Activated CD8-positive, alpha-beta T cell treated with anti-CD3 and anti-CD28 coated beads for 36 hours (primary cell): ENCODE measurements at regions of chr1 and their contacts with region 1.

Region 1: GRCh38 chr1:25204797-25205480 is 27.4 kb downstream of the SYF2 start:
- DNase-seq: peak; percentile 26
- ATAC-seq: peak; percentile 73
- H3K4me3 Mint-ChIP-seq: no peak overlapping the region
- H3K27ac Mint-ChIP-seq: no peak overlapping the region
- H3K4me1 Mint-ChIP-seq: no peaks in the 10 kb centered on the region
- H3K27me3 Mint-ChIP-seq: peaks cover 4% of the 10 kb centered on the region
- CTCF ChIP-seq: peak; percentile 87

Region 2: DNA sequence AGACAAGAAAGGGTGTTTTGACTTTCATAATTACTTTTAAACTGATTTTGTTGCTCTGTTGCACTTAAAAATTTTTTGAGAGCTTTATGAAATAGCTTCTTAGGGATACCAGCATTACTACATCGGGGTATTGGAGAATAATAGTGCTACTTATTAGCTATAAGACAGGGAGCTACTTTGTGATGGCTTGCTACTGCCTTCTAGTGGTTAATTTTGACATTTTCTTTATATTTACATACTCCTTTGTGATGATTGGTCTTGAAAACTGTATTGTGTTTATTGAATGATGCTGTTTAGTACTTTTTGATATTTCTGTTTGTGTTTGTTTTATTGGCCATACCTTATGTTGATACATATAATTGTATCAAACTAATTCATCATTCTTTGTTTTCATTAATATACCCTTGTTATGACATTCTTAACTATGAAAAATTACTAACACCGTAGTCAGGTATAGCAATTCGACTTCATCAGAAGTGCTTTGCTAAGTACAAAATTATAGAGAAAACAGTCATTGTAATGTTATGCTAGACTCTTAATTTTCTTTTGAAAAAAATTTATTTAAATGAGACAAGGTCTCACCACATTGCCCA is 374.2 kb before region 1 on chr1:
- CTCF ChIA-PET with region 1: interaction called, 11 read pairs
- POLR2A ChIA-PET with region 1: no interaction called
- intact Hi-C with region 1: no loop called
- DNase-seq: no peak
- ATAC-seq: no peak
- H3K4me3 Mint-ChIP-seq: no peak overlapping the region
- H3K27ac Mint-ChIP-seq: no peak overlapping the region
- H3K4me1 Mint-ChIP-seq: no peaks in the 10 kb centered on the region
- H3K27me3 Mint-ChIP-seq: peaks cover 2% of the 10 kb centered on the region
- CTCF ChIP-seq: peak; percentile 96

Region 3: GRCh38 chr1:24919791-24920532 is 285.0 kb before region 1 on chr1:
- CTCF ChIA-PET with region 1: no interaction called
- POLR2A ChIA-PET with region 1: no interaction called
- intact Hi-C with region 1: no loop called
- DNase-seq: peak; percentile 63
- ATAC-seq: no peak
- H3K4me3 Mint-ChIP-seq: peak overlapping the region; percentile 13
- H3K27ac Mint-ChIP-seq: peak overlapping the region; percentile 95
- H3K4me1 Mint-ChIP-seq: peaks cover 92% of the 10 kb centered on the region
- H3K27me3 Mint-ChIP-seq: no peaks in the 10 kb centered on the region
- CTCF ChIP-seq: no peak

Region 4: GRCh38 chr1:25030674-25031589 is 174.0 kb before region 1 on chr1:
- CTCF ChIA-PET with region 1: no interaction called
- POLR2A ChIA-PET with region 1: no interaction called
- intact Hi-C with region 1: no loop called
- DNase-seq: peak; percentile 91
- ATAC-seq: peak; percentile 60
- H3K4me3 Mint-ChIP-seq: no peak overlapping the region
- H3K27ac Mint-ChIP-seq: no peak overlapping the region
- H3K4me1 Mint-ChIP-seq: peaks cover 89% of the 10 kb centered on the region
- H3K27me3 Mint-ChIP-seq: no peaks in the 10 kb centered on the region
- CTCF ChIP-seq: no peak

Region 5: DNA sequence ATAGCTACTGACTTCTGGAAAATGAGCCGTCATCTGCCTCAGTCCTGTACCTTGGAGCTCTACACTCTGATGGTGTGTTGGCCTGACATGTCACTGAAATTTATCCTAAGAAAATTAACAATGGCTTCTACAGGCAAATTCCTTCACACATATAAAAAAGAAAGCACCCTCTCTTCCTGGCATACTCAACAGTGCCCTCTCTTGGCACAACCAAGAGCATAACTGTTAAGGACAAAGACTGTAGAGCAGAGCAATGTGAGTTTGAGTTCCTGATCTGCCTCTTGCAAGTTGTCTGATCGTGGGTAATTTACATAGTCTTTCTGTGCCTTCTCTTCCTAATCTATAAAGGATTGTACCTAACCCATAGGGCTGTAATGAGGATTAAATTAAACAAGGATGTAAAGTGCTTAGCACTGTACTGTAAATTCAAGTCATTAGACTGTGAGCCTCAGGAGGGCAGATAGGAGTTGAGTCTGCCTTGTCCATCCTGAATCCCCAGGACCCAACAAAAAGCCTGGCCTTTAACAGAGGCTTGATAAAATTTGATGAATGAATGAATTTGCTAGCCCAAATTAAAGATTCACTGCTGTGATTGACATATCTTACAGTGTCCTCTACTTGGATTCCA is 56.2 kb before region 1 on chr1:
- CTCF ChIA-PET with region 1: interaction called, 11 read pairs
- POLR2A ChIA-PET with region 1: no interaction called
- intact Hi-C with region 1: no loop called
- DNase-seq: peak; percentile 56
- ATAC-seq: peak; percentile 83
- H3K4me3 Mint-ChIP-seq: no peak overlapping the region
- H3K27ac Mint-ChIP-seq: no peak overlapping the region
- H3K4me1 Mint-ChIP-seq: peaks cover 4% of the 10 kb centered on the region
- H3K27me3 Mint-ChIP-seq: peaks cover 16% of the 10 kb centered on the region
- CTCF ChIP-seq: peak; percentile 69

Region 6: DNA sequence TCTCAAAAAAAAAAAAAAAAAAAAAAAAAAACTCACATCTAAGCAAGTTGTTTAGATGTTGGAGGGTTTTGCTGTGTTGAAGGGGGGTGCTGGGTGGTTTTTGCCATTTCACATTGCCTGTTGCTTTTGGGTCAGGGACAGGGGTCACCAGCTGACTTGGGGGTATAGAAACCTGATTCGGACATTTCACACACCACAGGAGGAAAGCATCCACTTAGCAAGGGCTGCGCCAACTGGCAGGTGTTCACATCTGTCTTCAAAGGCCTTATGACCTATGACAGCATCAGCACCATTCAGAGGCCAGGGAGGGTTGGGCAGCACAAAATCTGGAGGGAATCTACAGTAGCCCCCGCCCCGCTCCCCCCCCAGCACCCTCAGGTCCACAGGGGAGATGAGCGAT is 17.9 kb before region 1 on chr1:
- CTCF ChIA-PET with region 1: interaction called, 13 read pairs
- POLR2A ChIA-PET with region 1: interaction called, 3 read pairs
- intact Hi-C with region 1: no loop called
- DNase-seq: no peak
- ATAC-seq: no peak
- H3K4me3 Mint-ChIP-seq: no peak overlapping the region
- H3K27ac Mint-ChIP-seq: no peak overlapping the region
- H3K4me1 Mint-ChIP-seq: no peaks in the 10 kb centered on the region
- H3K27me3 Mint-ChIP-seq: peaks cover 3% of the 10 kb centered on the region
- CTCF ChIP-seq: no peak

Region 7: GRCh38 chr1:25217598-25218232 is 12.8 kb after region 1 on chr1:
- CTCF ChIA-PET with region 1: interaction called, 30 read pairs
- POLR2A ChIA-PET with region 1: interaction called, 4 read pairs
- intact Hi-C with region 1: no loop called
- DNase-seq: no peak
- ATAC-seq: no peak
- H3K4me3 Mint-ChIP-seq: no peak overlapping the region
- H3K27ac Mint-ChIP-seq: no peak overlapping the region
- H3K4me1 Mint-ChIP-seq: no peaks in the 10 kb centered on the region
- H3K27me3 Mint-ChIP-seq: no peaks in the 10 kb centered on the region
- CTCF ChIP-seq: no peak

Region 8: DNA sequence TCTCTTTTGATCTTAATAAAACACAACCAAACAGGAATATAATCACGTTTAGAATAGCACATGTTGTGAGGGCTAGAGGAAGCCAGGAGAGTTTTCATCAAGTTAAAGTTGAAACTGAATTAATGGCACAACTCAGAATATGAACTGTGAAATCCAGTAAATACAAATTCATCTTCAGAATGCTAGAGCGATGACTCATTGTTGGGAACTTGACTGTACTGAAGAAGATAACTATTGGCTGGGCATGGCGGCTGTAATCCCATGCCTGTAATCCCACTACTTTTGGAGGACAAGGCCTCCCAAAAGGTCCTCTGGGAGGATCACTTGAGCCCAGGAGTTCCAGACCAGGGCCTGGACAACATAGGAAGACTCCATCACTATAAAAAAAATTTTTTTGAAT is 18.5 kb after region 1 on chr1:
- CTCF ChIA-PET with region 1: interaction called, 14 read pairs
- POLR2A ChIA-PET with region 1: no interaction called
- intact Hi-C with region 1: no loop called
- DNase-seq: no peak
- ATAC-seq: no peak
- H3K4me3 Mint-ChIP-seq: no peak overlapping the region
- H3K27ac Mint-ChIP-seq: peak overlapping the region; percentile 58
- H3K4me1 Mint-ChIP-seq: peaks cover 7% of the 10 kb centered on the region
- H3K27me3 Mint-ChIP-seq: no peaks in the 10 kb centered on the region
- CTCF ChIP-seq: no peak

Region 9: GRCh38 chr1:25360596-25361581 is 155.9 kb after region 1 on chr1:
- CTCF ChIA-PET with region 1: no interaction called
- POLR2A ChIA-PET with region 1: no interaction called
- intact Hi-C with region 1: no loop called
- DNase-seq: no peak
- ATAC-seq: no peak
- H3K4me3 Mint-ChIP-seq: no peak overlapping the region
- H3K27ac Mint-ChIP-seq: peak overlapping the region; percentile 74
- H3K4me1 Mint-ChIP-seq: peaks cover 38% of the 10 kb centered on the region
- H3K27me3 Mint-ChIP-seq: no peaks in the 10 kb centered on the region
- CTCF ChIP-seq: no peak

Region 10: GRCh38 chr1:25580927-25581326 is 376.0 kb after region 1 on chr1:
- CTCF ChIA-PET with region 1: no interaction called
- POLR2A ChIA-PET with region 1: no interaction called
- intact Hi-C with region 1: no loop called
- DNase-seq: no peak
- ATAC-seq: no peak
- H3K4me3 Mint-ChIP-seq: no peak overlapping the region
- H3K27ac Mint-ChIP-seq: no peak overlapping the region
- H3K4me1 Mint-ChIP-seq: no peaks in the 10 kb centered on the region
- H3K27me3 Mint-ChIP-seq: no peaks in the 10 kb centered on the region
- CTCF ChIP-seq: no peak